ENCODE measurements at regions of chr13 and their contacts with region 1.

Region 1: DNA sequence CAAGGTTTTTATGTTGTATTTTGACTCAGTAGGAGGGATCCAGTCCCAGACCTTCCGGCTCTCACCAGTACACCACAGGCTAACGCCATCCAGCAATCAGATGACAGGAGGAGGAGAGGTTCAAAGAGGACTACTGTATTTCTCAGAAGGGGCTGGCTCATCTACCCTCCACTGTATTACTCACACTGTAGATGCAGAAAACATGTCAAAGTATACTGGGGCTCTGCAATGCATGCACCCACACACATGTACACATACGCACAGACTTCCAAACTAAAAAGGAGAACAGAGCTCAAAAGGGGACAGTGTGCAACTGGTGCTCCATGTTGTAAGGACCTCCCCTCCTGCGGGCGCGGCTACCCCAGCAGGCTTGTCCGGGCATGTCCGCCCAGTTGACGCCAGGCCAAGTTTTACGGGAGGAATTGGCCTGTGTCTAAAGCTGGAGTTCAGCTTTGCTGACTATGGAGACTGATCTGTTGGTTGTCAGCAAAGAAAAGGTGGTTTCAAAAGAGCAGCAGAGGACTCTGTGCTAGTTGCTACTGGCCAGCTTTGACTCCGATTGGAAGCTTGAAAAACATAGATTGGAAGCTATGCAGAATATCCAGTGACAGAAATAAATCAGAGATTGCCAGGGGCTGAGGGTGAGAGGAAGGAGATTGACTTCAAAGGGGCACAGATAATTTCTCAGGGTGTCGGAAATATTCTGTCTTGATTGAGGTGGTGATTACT is 314.2 kb downstream of the DLEU7 start:
- DNase-seq: peak; percentile 49
- H3K4me3 Mint-ChIP-seq: no peak overlapping the region
- H3K27ac Mint-ChIP-seq: no peak overlapping the region
- H3K4me1 Mint-ChIP-seq: peaks cover 18% of the 10 kb centered on the region
- H3K27me3 Mint-ChIP-seq: peaks cover 13% of the 10 kb centered on the region

Region 2: GRCh38 chr13:49976314-49977258 is 552.7 kb before region 1 on chr13:
- CTCF ChIA-PET with region 1: interaction called, 6 read pairs
- intact Hi-C with region 1: loop called (anchors 1 kb)
- DNase-seq: peak; percentile 85
- H3K4me3 Mint-ChIP-seq: no peak overlapping the region
- H3K27ac Mint-ChIP-seq: no peak overlapping the region
- H3K4me1 Mint-ChIP-seq: no peaks in the 10 kb centered on the region
- H3K27me3 Mint-ChIP-seq: no peaks in the 10 kb centered on the region

Region 3: DNA sequence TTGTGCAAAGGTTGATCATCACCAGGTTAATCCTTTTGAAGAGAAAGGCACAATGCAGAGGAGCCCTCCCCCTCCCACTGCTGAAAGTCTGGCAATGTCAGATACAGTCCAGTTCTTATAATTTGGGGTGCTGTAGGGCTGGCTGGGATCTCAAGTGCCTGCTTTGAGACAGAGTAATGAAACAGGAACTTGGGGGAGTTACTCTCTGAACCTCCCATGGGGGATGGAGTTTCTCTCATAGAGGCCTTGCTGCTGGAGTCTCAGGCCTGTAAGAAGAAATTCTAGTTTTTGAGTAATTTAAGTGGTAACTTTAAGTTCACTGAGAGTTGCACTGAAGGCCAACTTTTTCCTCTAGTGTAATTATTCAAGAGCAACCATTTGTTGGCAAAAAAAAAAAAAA is 103.5 kb before region 1 on chr13:
- CTCF ChIA-PET with region 1: no interaction called
- intact Hi-C with region 1: loop called (anchors 1 kb)
- DNase-seq: no peak
- H3K4me3 Mint-ChIP-seq: no peak overlapping the region
- H3K27ac Mint-ChIP-seq: no peak overlapping the region
- H3K4me1 Mint-ChIP-seq: peaks cover 23% of the 10 kb centered on the region
- H3K27me3 Mint-ChIP-seq: no peaks in the 10 kb centered on the region

Region 4: GRCh38 chr13:50801087-50801931 is 272.0 kb after region 1 on chr13:
- CTCF ChIA-PET with region 1: interaction called, 5 read pairs
- intact Hi-C with region 1: loop called (anchors 1 kb)
- DNase-seq: peak; percentile 80
- H3K4me3 Mint-ChIP-seq: no peak overlapping the region
- H3K27ac Mint-ChIP-seq: no peak overlapping the region
- H3K4me1 Mint-ChIP-seq: peaks cover 5% of the 10 kb centered on the region
- H3K27me3 Mint-ChIP-seq: no peaks in the 10 kb centered on the region

Region 5: GRCh38 chr13:51070005-51070649 is 540.8 kb after region 1 on chr13:
- CTCF ChIA-PET with region 1: no interaction called
- intact Hi-C with region 1: loop called (anchors 1 kb)
- DNase-seq: peak; percentile 88
- H3K4me3 Mint-ChIP-seq: no peak overlapping the region
- H3K27ac Mint-ChIP-seq: no peak overlapping the region
- H3K4me1 Mint-ChIP-seq: peaks cover 3% of the 10 kb centered on the region
- H3K27me3 Mint-ChIP-seq: peaks cover 3% of the 10 kb centered on the region

Measured in activated naive CD4-positive, alpha-beta T cell treated with anti-CD3 and anti-CD28 coated beads for 36 hours (primary cell).